Right cardiac atrium (tissue), 5 donors: ENCODE measurements at regions of chr2 and their contacts with region 1.

Region 1: DNA sequence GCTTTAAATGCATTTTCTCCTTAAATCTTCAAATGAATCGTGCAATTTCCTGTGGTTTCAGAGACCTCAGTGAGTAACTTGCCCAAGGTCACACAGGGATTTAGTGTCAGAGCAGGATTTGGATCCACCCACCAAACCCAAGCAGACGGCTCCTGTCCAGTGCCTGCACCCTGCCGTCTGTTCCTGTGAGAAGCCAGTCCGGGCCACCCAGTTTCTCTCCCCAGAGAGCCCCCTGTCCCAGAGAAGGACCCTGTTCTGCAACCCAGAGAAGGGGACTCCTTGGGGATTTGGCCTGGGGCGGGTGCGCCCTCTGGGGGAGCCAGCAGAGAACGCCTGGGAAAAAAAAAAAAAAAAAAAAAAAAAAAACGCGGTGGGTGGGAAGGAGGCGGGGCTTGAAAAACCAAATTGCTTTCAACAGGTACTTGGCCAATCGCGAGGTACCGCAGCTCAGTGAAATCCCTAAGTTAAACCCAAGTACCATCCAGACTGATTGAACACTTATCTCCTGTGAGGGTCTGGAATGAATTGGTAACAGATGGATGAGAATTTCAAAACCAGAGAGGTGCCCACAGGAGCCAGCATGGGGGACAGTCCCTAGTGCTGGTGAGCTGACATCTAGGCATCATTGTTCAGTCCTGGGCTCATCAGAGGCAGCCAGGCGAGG is 30.9 kb upstream of the REEP1 start:
- DNase-seq: peak; percentile 34 to 71 (median 71)
- ATAC-seq: peak; percentile 49 to 60
- H3K4me3 ChIP-seq: no peak overlapping the region
- H3K27ac ChIP-seq: no peak overlapping the region
- H3K4me1 ChIP-seq: no peaks in the 10 kb centered on the region
- H3K27me3 ChIP-seq: no peaks in the 10 kb centered on the region

Region 2: DNA sequence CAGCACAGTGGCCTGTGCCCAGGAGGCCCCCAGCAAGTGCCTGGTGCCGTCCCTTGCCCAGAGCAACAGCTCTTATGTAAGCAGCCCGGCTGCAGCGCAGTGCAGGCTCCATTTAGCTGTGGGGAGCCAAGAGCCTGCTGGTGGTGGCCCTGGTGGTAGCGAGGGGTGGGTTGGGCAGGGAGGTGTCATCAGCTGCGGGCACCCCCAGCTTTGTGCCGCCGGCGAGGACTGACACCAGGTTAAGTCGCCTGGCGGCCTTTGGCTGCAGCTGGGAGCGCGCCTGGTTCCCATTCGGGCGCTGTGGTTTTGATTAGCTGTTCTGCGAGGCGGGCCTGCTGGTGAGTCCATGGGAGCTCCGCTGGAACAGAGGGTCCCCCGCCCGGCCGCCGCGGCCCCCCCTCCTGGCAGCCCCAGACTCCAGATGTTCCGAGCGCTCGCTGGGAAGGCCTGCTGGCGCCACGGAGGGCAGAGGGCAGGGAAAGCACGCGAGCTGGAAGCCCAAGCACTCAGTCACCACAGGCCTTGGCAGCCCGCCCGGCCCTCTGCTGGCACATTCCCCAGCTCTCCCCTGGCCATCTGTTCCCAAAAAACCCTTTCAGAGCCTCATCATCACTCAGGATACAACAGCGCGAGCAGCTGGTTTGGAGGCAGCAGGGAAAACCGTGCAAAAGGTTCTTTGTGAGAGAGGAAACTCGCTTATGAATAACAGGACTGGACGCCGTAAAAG is 596.1 kb before region 1 on chr2:
- intact Hi-C with region 1: no loop called
- DNase-seq: peak; percentile 98 to 100 (median 100)
- ATAC-seq: peak; percentile 93 to 94
- H3K4me3 ChIP-seq: no peak overlapping the region
- H3K27ac ChIP-seq: peak overlapping the region; percentile 94
- H3K4me1 ChIP-seq: peaks cover 70% of the 10 kb centered on the region
- H3K27me3 ChIP-seq: no peaks in the 10 kb centered on the region

Region 3: DNA sequence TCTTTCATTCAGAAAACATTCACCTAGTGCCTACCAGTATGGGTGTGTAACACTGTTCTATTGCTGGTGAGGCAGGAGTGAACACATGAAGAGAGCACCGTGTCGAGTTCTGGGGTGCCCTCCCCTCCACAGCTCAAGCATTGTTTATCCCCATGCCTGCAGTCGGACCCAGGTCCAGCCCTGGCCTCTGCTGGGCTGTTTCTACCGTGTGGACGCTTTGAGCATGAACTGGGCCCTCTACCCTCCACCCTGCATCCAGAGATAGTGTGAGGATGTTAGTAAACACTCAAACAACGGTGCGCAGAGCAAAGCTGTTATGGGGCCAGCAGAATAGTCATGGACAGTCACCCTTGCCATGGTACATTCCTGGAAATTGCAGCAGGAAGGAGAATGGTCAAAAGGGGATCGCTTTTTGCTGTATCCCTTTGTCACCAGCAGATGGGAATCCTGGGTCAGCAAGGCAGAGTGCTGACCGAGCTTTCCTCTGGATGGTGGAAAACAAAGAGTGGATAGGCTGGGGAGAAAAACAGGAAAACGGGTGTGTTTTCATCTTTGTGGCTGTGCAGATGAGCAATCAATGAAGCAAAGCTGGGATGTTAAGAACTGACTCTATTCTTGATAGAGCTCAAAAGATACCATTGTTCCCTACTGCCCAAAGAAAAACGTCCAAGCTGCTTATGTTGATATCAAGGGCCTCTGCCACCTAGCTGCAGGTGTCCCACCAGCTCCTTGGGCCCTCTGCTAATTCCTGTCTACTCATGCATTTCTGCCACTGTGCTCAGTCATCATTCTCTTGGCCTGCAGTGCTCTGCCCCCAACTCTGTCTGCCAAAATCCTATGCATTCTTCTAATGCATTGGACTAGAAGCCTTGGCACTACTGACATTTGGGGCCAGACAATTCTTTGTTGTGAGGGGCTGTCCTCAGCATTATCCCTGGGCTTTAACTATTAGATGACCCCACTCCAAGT is 69.6 kb before region 1 on chr2:
- intact Hi-C with region 1: loop called in 2 of 4 experiments (anchors 5 to 10 kb)
- DNase-seq: no peak
- ATAC-seq: peak; percentile 59 to 69
- H3K4me3 ChIP-seq: no peak overlapping the region
- H3K27ac ChIP-seq: no peak overlapping the region
- H3K4me1 ChIP-seq: peaks cover 14% of the 10 kb centered on the region
- H3K27me3 ChIP-seq: no peaks in the 10 kb centered on the region

Region 4: DNA sequence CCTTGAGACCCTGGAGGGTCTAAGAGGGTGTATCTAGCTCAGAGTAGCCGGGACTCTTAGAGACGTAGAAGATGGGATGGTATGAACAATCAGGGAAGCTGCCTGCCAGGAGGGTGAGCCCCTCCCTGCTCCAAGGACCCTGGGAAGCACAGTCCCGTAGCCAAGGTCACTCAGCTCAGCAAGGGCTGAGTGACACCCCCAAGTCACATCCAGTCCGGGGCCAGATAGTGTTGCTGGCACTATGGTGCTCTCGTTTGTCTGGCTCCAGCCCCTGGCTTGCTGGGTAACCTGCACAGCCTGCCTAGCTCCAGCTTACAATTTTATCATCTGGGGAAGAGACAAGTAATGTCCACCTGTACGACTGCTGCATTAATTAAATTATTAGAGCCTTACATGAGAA is 53.2 kb before region 1 on chr2:
- intact Hi-C with region 1: no loop called
- DNase-seq: no peak
- ATAC-seq: peak; percentile 53 to 55
- H3K4me3 ChIP-seq: no peak overlapping the region
- H3K27ac ChIP-seq: no peak overlapping the region
- H3K4me1 ChIP-seq: peaks cover 4% of the 10 kb centered on the region
- H3K27me3 ChIP-seq: no peaks in the 10 kb centered on the region